ENCODE measurements at regions of chr2 and their contacts with region 1.

Region 1: DNA sequence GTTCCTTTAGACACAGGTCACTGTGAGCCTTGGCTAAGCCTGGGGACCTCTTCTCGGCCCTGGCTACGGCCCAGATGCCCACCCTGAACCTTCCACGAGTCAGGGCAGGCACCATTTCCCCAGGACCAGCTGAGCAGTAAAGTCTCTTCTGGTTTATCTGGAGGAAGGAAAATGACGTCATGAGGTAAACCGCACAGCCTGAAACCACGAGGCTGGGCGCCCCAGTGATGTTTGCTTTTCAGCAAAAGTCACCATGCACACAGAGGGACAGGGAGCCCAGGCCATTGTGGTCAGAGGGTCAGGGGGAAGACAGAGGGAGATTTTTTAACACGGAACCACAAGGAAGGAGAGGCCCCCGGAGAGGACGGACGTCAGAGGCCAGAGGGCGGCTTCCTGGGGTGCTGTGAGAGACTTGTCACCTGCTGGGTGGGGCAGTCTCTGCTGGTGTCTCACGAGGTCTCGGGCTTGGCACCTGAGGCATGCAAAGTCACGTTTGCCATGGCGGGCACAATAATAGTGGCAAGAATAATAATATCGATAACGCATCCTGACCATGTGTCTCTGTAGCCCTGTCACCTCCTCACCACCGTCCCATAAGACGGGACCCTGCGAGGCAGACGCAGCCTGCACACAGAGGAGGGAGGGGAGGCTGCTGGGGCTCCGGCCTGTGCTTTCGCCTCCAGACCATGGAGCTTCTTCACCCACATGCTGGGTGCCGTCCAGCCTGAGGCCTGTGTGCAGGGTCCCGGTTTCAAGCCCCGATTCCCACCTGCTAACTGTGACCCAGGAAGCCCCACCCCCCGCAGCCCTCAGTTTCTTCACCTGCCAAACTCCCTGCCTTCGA is 33.2 kb upstream of the FOSL2 start:
- DNase-seq: no peak
- ATAC-seq: no peak
- H3K4me3 ChIP-seq: no peak overlapping the region
- H3K27ac ChIP-seq: peak overlapping the region in 1 of 2 experiments; percentile 70; a peak in 3 of 6 replicates
- H3K4me1 ChIP-seq: peaks cover 29% of the 10 kb centered on the region
- CTCF ChIP-seq: no peak
- EP300 ChIP-seq: no peak
- POLR2A ChIP-seq: no peak
- RAD21 ChIP-seq: no peak

Region 2: DNA sequence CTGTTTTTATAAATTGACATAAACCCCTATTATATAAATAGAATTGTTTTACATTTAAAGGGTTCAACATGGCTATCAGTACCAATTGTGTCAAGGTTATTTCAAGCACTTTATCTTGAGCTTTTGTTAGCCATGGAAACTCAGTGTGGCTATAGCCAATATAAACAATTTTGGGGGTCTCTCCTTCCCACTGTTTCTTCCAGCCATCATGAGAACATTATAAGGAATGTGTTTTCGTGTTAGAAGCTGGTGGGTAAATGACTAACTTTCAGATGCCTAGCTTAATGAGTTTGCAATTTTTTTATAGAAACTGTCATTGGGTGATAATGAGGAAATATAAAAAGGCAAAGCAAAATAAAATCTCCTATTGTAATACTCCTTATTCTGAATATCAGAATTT is 120.2 kb before region 1 on chr2:
- CTCF ChIA-PET with region 1: no interaction called
- POLR2A ChIA-PET with region 1: no interaction called
- DNase-seq: no peak
- ATAC-seq: no peak
- H3K4me3 ChIP-seq: no peak overlapping the region
- H3K27ac ChIP-seq: no peak overlapping the region
- H3K4me1 ChIP-seq: peaks cover 16% of the 10 kb centered on the region
- CTCF ChIP-seq: no peak
- EP300 ChIP-seq: no peak
- POLR2A ChIP-seq: no peak
- RAD21 ChIP-seq: no peak

Region 3: DNA sequence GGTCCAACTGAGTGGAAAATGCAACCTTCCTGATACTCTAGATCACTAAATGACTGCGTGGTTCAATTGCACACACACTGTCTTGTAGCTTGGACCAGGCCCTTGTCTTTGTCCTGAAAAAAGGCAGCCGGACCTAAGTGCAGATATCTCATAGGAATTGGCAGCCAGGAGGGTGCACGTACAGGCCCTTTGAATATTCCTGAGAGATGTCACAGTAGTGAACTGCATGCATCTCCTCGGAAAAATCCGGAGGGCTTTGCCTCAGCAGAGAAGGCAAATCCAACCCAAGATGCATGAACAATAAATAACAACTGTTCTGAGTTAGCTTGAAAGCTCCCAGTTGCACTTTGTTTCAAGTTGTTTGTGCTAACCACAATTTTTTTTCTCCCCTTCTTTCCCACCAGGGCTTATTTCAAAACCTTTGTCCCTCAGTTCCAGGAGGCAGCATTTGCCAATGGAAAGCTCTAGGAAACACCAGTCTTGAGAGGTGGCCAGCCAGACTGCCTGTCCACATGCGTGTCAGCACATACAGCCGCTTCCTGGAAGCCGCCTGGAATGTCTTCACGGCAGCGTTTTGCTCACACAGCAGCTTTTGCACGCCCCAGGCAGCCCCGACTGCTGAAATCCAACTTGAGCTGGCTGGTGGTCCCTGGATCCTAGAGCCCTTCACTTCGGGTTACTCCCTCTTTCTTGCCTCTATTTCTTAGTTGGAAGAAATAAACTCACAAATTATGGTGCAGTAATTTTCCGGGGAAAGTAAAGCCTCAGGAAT is 21.2 kb before region 1 on chr2:
- CTCF ChIA-PET with region 1: no interaction called
- POLR2A ChIA-PET with region 1: no interaction called
- DNase-seq: no peak
- ATAC-seq: peak in 1 of 2 experiments; percentile 8; a peak in 1 of 6 replicates
- H3K4me3 ChIP-seq: no peak overlapping the region
- H3K27ac ChIP-seq: peak overlapping the region; percentile 25 to 88; a peak in 4 of 6 replicates
- H3K4me1 ChIP-seq: peaks cover 30% of the 10 kb centered on the region
- CTCF ChIP-seq: no peak
- EP300 ChIP-seq: no peak
- POLR2A ChIP-seq: no peak
- RAD21 ChIP-seq: no peak

Region 4: DNA sequence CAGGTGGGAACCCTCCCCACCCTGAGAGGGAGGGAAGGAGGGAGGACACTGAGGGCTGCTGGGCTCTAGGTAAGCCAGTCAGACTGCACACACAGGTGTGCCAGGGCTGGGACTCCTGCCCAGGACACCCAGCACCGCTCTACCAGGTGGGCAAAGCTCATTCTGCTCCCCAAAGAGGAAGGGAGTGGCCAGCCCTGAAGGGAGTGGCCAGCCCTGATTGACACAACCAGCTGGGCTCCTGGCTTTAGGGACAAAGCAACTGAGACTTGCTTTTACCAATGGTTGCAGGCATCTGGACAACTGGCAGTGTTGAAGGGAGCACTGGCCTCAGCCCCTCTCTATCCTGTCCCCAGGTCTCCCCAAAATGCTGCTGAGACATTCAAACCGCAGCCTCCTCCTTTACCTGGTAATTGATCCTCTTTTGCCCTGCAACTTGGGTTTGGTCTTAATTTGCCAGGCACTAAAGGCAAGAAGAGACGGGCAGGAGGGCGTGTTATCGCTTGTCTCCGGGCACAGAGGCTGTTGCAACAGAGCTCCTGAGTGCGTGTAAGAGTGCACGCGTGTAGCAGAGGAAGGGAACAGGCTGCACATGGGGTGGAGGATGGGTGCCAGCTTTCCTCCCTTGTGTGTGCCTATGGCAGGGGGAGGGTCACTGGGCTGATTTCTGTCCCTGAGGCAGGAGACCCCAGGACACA is 18.7 kb after region 1 on chr2:
- CTCF ChIA-PET with region 1: interaction called, 10 read pairs
- POLR2A ChIA-PET with region 1: no interaction called
- DNase-seq: no peak
- ATAC-seq: peak in 1 of 2 experiments; percentile 15; a peak in 2 of 6 replicates
- H3K4me3 ChIP-seq: no peak overlapping the region
- H3K27ac ChIP-seq: peak overlapping the region; percentile 38 to 41; a peak in 4 of 6 replicates
- H3K4me1 ChIP-seq: peaks cover 17% of the 10 kb centered on the region; the same call in 2 of the 3 replicates
- CTCF ChIP-seq: no peak
- EP300 ChIP-seq: no peak
- POLR2A ChIP-seq: no peak
- RAD21 ChIP-seq: no peak

Region 5: GRCh38 chr2:28633746-28634145 is 274.3 kb after region 1 on chr2:
- CTCF ChIA-PET with region 1: no interaction called
- POLR2A ChIA-PET with region 1: no interaction called
- DNase-seq: peak in 1 of 2 experiments; percentile 68
- ATAC-seq: peak; percentile 76 to 91; a peak in 5 of 6 replicates
- H3K4me3 ChIP-seq: no peak overlapping the region
- H3K27ac ChIP-seq: peak overlapping the region; percentile 47 to 62; a peak in 4 of 6 replicates
- H3K4me1 ChIP-seq: peaks cover 14% of the 10 kb centered on the region; the same call in 2 of the 3 replicates
- CTCF ChIP-seq: no peak
- EP300 ChIP-seq: no peak
- POLR2A ChIP-seq: no peak
- RAD21 ChIP-seq: no peak

Measured in A549 (cell line).